Caco-2 (cell line): ENCODE measurements at regions of chr1 and their contacts with region 1.

Region 1: DNA sequence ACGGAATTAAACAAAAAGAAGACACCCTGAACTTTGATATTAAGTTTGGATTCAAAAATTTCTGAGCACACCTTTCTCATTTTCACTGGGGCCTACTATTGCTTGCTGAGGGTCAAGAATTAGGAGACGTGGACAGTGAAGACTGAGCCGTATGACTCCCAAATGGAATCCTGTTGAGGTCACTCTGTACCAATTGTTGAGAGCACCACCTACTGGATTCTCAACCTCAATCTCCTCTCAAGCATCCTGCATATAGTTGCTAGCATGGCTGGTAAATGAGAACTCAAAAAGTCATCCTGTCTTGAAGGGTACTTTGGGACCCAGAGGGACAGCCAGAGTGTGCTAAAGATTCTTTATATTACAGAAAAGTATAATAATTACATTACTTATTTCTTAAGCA is 20.2 kb upstream of the MTR start:
- DNase-seq: peak in 1 of 2 experiments; percentile 23
- H3K4me3 ChIP-seq: no peak overlapping the region
- H3K4me3 Mint-ChIP-seq: no peak overlapping the region
- H3K27ac Mint-ChIP-seq: no peak overlapping the region
- H3K4me1 ChIP-seq: no peaks in the 10 kb centered on the region
- H3K4me1 Mint-ChIP-seq: no peaks in the 10 kb centered on the region
- H3K27me3 ChIP-seq: no peaks in the 10 kb centered on the region
- H3K27me3 Mint-ChIP-seq: peaks cover 17% of the 10 kb centered on the region
- CTCF ChIP-seq: peak; percentile 44 to 53

Region 2: GRCh38 chr1:236759252-236759859 is 15.6 kb before region 1 on chr1:
- CTCF ChIA-PET with region 1: no interaction called
- POLR2A ChIA-PET with region 1: no interaction called
- intact Hi-C with region 1: loop called (anchors 2 kb)
- DNase-seq: peak in 1 of 2 experiments; percentile 39
- H3K4me3 ChIP-seq: no peak overlapping the region
- H3K4me3 Mint-ChIP-seq: no peak overlapping the region
- H3K27ac Mint-ChIP-seq: no peak overlapping the region
- H3K4me1 ChIP-seq: 0 out of 2 replicates have a peak, but pooled peaks cover 4% of the 10 kb centered on the region
- H3K4me1 Mint-ChIP-seq: no peaks in the 10 kb centered on the region
- H3K27me3 ChIP-seq: no peaks in the 10 kb centered on the region
- H3K27me3 Mint-ChIP-seq: peaks cover 3% of the 10 kb centered on the region
- CTCF ChIP-seq: peak; percentile 53 to 54